AG04449 (cell line): ENCODE measurements at regions of chr12 and their contacts with region 1.

Region 1: GRCh38 chr12:12786716-12787601 is 1.5 kb downstream of the APOLD1 start:
- DNase-seq: no peak
- H3K4me3 ChIP-seq: peak overlapping the region; percentile 65
- CTCF ChIP-seq: peak; percentile 5

Region 2: DNA sequence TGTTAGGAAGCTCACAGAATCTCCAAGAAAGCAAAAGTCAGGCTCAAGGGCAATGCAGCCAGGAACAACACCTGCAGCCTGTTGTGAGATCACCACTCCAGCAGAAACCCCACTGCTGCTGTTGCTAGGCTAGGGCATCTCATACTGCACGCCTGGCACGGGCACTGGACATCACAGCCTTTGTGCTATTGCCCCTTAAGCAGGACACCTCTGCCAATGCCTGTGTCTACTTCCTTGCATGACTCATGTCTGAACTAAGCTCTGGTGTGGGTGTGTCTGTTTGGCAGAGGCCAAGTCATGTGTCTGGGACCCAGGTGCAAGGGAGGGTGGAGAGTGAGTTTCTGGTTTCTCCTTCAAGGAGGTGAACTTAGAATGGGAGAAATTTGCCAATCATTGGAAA is 16.2 kb after region 1 on chr12:
- CTCF ChIA-PET with region 1: interaction called, 64 read pairs
- POLR2A ChIA-PET with region 1: no interaction called
- DNase-seq: no peak
- H3K4me3 ChIP-seq: no peak overlapping the region
- CTCF ChIP-seq: no peak

Region 3: GRCh38 chr12:12819671-12820311 is 32.8 kb after region 1 on chr12:
- CTCF ChIA-PET with region 1: interaction called, 44 read pairs
- POLR2A ChIA-PET with region 1: no interaction called
- DNase-seq: peak; percentile 92
- H3K4me3 ChIP-seq: no peak overlapping the region
- CTCF ChIP-seq: peak; percentile 6

Region 4: GRCh38 chr12:12975322-12976077 is 188.5 kb after region 1 on chr12:
- CTCF ChIA-PET with region 1: interaction called, 100 read pairs
- POLR2A ChIA-PET with region 1: no interaction called
- DNase-seq: no peak
- H3K4me3 ChIP-seq: no peak overlapping the region
- CTCF ChIP-seq: peak; percentile 52